ENCODE measurements at regions of chr2 and their contacts with region 1.

Region 1: DNA sequence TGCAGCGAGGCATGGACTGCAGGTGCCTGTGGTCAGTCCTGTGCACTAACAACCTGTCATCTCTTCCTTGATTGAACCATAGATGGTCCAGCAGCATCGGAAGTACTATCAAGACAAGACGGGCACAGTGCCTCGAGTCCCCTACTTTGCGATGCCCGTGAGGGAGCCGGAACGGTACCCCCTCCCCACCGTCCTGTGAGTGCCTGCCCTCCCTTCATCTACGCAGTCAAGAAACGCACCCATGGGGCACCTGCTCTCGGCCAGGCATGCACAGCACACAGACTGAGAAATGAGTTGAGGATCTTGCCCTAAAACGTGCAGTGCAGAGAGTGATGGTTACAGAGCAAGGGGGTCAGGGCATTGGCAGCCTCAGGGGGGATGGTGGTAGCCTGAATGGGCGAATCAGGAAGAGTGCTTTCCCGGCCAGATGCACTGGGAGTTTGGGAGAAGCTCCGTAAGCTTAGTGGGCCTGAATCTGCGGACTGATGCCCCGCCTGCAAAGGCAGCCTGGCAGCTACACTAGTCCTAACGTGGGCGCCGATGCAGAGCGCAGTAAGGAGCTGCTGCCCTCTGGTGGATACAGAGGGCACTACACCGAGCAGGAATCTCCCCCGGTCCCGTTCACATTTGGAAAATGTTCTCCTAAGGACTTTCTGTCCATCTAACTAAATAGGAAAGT is 63.6 kb downstream of the CIB4 start:
- DNase-seq: peak; percentile 55
- ATAC-seq: peak; percentile 89
- H3K4me3 ChIP-seq: no peak overlapping the region
- H3K27ac ChIP-seq: no peak overlapping the region
- H3K4me1 ChIP-seq: no peaks in the 10 kb centered on the region; the same call in 1 of the 2 replicates
- H3K27me3 ChIP-seq: peaks cover 4% of the 10 kb centered on the region
- CTCF ChIP-seq: peak; percentile 98

Region 2: DNA sequence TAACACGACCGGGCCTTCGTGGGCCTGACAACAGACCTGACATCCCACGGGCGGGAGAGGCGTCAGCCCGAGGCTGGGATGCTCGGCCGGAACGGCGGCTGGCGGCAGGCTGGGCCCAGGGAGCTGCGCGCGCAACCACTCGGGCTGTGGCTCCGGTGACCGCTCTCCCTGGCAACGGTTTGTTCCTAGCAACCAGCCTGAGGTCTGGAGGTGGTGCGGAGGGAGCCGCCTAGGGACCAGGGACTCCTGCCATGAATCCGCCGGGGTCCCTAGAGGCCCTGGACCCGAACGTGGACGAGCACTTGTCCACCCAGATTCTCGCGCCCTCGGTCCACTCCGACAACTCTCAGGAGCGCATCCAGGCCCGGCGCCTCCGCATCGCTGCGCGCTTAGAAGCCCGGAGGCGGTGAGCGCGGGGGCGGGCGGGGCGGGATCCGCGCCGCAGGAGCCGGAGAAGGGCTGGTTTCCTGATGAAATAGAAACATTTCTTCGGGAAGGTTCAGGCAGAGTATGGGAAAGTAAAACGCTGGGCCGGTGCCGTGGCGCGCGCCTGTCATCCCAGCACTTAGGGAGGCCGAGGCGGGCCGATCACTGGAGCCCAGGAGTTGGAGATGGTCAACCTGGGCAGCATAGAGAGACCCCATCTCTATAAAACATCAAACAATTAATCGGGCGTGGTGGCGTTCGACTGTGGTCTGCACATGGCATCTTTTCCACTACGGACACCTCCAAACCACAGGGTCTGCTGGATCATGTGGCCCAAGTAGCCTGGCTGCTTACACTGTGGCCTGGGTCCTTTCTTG is 175.6 kb before region 1 on chr2 and contains the start of gene DRC1:
- CTCF ChIA-PET with region 1: no interaction called
- POLR2A ChIA-PET with region 1: no interaction called
- in situ Hi-C with region 1: no loop called
- intact Hi-C with region 1: loop called (anchors 10 kb)
- DNase-seq: no peak
- ATAC-seq: peak; percentile 90
- H3K4me3 ChIP-seq: peak within 1 kb of the TSS; percentile 29 to 44
- H3K27ac ChIP-seq: no peak within 1 kb of the TSS
- H3K4me1 ChIP-seq: no peaks in the 10 kb centered on the region
- H3K27me3 ChIP-seq: no peaks in the 10 kb centered on the region
- CTCF ChIP-seq: no peak
- total RNA-seq, gene DRC1: 0.18 TPM

Region 3: GRCh38 chr2:26471766-26472706 is 105.5 kb before region 1 on chr2:
- CTCF ChIA-PET with region 1: interaction called, 4 read pairs
- POLR2A ChIA-PET with region 1: interaction called, 3 read pairs
- in situ Hi-C with region 1: no loop called
- intact Hi-C with region 1: loop called (anchors 5 kb)
- DNase-seq: no peak
- ATAC-seq: no peak
- H3K4me3 ChIP-seq: no peak overlapping the region
- H3K27ac ChIP-seq: no peak overlapping the region
- H3K4me1 ChIP-seq: peaks cover 4% of the 10 kb centered on the region; the same call in 1 of the 2 replicates
- H3K27me3 ChIP-seq: no peaks in the 10 kb centered on the region
- CTCF ChIP-seq: no peak; the same call in 1 of the 2 replicates

Region 4: GRCh38 chr2:26529406-26530239 is 48.0 kb before region 1 on chr2:
- CTCF ChIA-PET with region 1: no interaction called
- POLR2A ChIA-PET with region 1: no interaction called
- in situ Hi-C with region 1: no loop called
- intact Hi-C with region 1: no loop called
- DNase-seq: no peak
- ATAC-seq: no peak
- H3K4me3 ChIP-seq: no peak overlapping the region
- H3K27ac ChIP-seq: no peak overlapping the region
- H3K4me1 ChIP-seq: no peaks in the 10 kb centered on the region
- H3K27me3 ChIP-seq: no peaks in the 10 kb centered on the region; the same call in none of the 2 replicates
- CTCF ChIP-seq: no peak

Region 5: DNA sequence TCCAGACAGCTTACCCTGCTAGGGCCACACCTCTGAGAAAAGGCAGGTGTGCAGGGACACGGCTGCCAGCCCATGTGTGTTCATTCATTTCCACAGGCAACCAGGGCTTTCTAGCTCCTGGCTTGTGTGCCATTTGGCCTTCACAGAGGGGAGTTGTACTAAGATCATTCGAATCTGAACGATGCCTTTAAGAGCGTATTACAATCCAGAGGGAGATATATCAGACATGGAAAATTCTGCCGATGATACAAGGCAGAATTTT is 35.4 kb before region 1 on chr2:
- CTCF ChIA-PET with region 1: no interaction called
- POLR2A ChIA-PET with region 1: no interaction called
- in situ Hi-C with region 1: no loop called
- intact Hi-C with region 1: no loop called
- DNase-seq: no peak
- ATAC-seq: no peak
- H3K4me3 ChIP-seq: no peak overlapping the region
- H3K27ac ChIP-seq: no peak overlapping the region
- H3K4me1 ChIP-seq: no peaks in the 10 kb centered on the region
- H3K27me3 ChIP-seq: peaks cover 3% of the 10 kb centered on the region; the same call in 1 of the 2 replicates
- CTCF ChIP-seq: no peak

Region 6: DNA sequence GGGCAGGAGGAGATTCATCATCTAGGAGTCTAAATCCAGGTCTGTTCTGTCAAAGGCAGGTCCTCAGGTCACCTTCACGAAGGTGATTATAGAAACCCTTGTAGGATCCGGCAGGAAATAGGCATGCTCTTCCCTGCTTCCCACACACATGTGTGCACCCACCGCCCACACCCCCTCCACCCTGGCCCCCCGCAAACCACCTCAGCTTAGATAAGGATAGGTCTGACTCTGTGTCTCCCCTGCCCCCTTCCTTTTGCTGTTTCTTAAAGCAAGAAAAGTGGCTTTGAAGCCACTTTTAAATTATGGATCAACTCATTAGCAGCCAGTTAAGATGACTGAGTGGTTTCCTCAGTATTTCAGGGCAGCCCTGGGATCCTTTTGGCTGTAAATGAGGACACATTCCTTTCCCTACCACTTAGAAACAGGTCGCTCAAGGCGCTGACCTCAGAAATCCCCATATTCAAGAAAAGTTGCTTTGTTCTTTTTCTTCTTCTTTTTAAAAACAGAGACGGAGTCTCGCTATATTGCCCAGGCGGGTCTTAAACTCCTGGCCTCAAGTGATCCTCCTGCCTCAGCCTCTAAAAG is 78.1 kb after region 1 on chr2:
- CTCF ChIA-PET with region 1: no interaction called
- POLR2A ChIA-PET with region 1: no interaction called
- in situ Hi-C with region 1: no loop called
- intact Hi-C with region 1: no loop called
- DNase-seq: no peak
- ATAC-seq: no peak
- H3K4me3 ChIP-seq: no peak overlapping the region
- H3K27ac ChIP-seq: no peak overlapping the region
- H3K4me1 ChIP-seq: no peaks in the 10 kb centered on the region
- H3K27me3 ChIP-seq: peaks cover 2% of the 10 kb centered on the region; the same call in 1 of the 2 replicates
- CTCF ChIP-seq: no peak

Region 7: GRCh38 chr2:26696351-26696816 is 118.8 kb after region 1 on chr2:
- CTCF ChIA-PET with region 1: no interaction called
- POLR2A ChIA-PET with region 1: no interaction called
- in situ Hi-C with region 1: no loop called
- intact Hi-C with region 1: no loop called
- DNase-seq: peak; percentile 77
- ATAC-seq: peak; percentile 63
- H3K4me3 ChIP-seq: no peak overlapping the region
- H3K27ac ChIP-seq: no peak overlapping the region
- H3K4me1 ChIP-seq: peaks cover 6% of the 10 kb centered on the region
- H3K27me3 ChIP-seq: peaks cover 10% of the 10 kb centered on the region; the same call in 1 of the 2 replicates
- CTCF ChIP-seq: no peak

Region 8: GRCh38 chr2:26725521-26725820 is 147.9 kb after region 1 on chr2:
- CTCF ChIA-PET with region 1: interaction called, 14 read pairs
- POLR2A ChIA-PET with region 1: no interaction called
- in situ Hi-C with region 1: no loop called
- intact Hi-C with region 1: no loop called
- DNase-seq: no peak
- ATAC-seq: no peak
- H3K4me3 ChIP-seq: no peak overlapping the region
- H3K27ac ChIP-seq: peak overlapping the region; percentile 80
- H3K4me1 ChIP-seq: peaks cover 63% of the 10 kb centered on the region
- H3K27me3 ChIP-seq: no peaks in the 10 kb centered on the region
- CTCF ChIP-seq: no peak